ENCODE measurements at regions of chr20 and their contacts with region 1.

Region 1: GRCh38 chr20:47725248-47725973 is 59.9 kb downstream of the SULF2 start:
- DNase-seq: peak; percentile 84 to 86
- H3K4me3 ChIP-seq: no peak overlapping the region
- H3K27ac ChIP-seq: no peak overlapping the region
- H3K4me1 ChIP-seq: 0 out of 2 replicates have a peak, but pooled peaks cover 4% of the 10 kb centered on the region
- H3K27me3 ChIP-seq: no peaks in the 10 kb centered on the region
- CTCF ChIP-seq: peak; percentile 99

Region 2: DNA sequence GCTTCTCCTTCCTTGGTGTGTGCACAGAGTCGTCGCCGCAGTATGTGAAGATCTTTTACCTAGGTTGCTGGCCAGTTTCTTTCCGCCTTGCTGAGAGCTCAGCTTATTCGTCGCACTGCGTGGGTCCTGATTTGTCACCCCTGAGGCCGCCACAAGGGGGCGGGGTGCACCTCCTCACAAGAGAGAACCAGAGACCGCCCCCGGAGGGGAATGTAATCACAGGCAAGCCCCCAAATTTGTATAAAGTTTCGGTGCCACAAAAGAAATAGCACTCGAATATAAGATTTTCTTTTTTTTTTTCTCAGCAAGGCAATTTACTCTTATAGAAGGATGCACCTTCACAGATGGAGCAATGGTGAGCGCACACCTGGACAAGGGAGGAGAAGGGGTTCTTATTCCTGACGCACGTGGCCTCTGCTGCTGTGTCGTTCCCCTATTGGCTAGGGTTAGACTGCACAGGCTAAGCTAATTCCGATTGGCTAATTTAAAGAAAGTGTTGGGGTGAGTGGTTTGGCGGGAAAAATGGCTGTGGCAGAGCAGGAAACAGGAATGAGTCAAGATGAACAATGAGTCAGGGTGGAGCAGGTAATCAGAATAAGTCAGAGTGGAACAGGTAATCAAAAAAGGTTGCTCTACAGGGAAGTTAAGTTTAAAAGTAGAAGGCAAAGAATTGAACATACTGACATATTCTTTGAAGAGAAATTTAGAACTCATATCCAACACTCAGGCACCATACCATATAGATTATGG is 204.2 kb before region 1 on chr20:
- CTCF ChIA-PET with region 1: no interaction called
- POLR2A ChIA-PET with region 1: no interaction called
- intact Hi-C with region 1: no loop called
- DNase-seq: no peak
- H3K4me3 ChIP-seq: 0 out of 2 replicates have a peak overlapping the region, but pooled peaks have one; percentile 22
- H3K27ac ChIP-seq: no peak overlapping the region
- H3K4me1 ChIP-seq: no peaks in the 10 kb centered on the region
- H3K27me3 ChIP-seq: no peaks in the 10 kb centered on the region
- CTCF ChIP-seq: no peak

Region 3: DNA sequence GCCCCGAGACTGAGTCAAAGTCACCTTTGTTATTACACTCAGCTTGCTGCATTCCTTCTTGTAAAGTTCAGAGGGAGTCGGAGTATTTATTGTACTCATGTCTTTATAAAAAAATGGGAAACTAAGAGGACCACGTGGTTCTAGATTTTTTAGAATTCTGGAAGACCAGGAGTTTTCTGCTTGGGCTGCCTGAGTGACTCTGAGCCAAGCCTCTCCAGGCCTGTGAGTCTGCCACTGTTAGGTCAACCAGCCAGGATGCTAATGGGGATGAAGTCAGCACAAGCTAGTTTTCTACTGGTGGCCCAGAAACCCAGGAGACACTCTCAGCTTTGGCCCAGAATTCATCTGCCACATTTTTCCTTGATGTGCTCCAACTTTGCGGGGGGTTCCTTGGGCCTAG is 513.4 kb after region 1 on chr20:
- CTCF ChIA-PET with region 1: interaction called, 17 read pairs
- POLR2A ChIA-PET with region 1: no interaction called
- intact Hi-C with region 1: no loop called
- DNase-seq: no peak
- H3K4me3 ChIP-seq: no peak overlapping the region
- H3K27ac ChIP-seq: peak overlapping the region; percentile 34
- H3K4me1 ChIP-seq: peaks cover 16% of the 10 kb centered on the region
- H3K27me3 ChIP-seq: no peaks in the 10 kb centered on the region
- CTCF ChIP-seq: no peak